Caco-2 (cell line): ENCODE measurements at regions of chr3 and their contacts with region 1.

Region 1: DNA sequence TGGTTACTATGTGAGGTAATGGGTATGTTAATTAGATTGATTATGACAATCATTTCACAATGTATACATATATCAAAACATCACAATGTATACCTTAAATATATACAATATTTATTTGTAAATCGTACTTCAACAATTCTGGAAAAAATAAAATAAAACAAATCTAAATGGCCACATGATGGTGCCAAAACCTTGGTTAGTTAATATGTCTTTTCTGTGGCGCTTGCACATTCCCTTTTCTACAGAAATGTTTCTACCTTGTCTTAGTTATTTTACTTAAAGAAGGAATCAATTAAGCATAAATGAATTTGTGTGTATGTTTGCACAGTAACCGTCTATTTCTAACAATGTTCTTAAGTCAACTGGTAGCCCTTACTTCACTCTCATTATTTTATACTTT is 53.4 kb downstream of the OXSM start:
- DNase-seq: no peak
- H3K4me3 ChIP-seq: no peak overlapping the region
- H3K4me3 Mint-ChIP-seq: no peak overlapping the region
- H3K27ac Mint-ChIP-seq: no peak overlapping the region
- H3K4me1 ChIP-seq: no peaks in the 10 kb centered on the region
- H3K4me1 Mint-ChIP-seq: no peaks in the 10 kb centered on the region
- H3K27me3 ChIP-seq: no peaks in the 10 kb centered on the region
- H3K27me3 Mint-ChIP-seq: peaks cover 2% of the 10 kb centered on the region
- CTCF ChIP-seq: no peak

Region 2: DNA sequence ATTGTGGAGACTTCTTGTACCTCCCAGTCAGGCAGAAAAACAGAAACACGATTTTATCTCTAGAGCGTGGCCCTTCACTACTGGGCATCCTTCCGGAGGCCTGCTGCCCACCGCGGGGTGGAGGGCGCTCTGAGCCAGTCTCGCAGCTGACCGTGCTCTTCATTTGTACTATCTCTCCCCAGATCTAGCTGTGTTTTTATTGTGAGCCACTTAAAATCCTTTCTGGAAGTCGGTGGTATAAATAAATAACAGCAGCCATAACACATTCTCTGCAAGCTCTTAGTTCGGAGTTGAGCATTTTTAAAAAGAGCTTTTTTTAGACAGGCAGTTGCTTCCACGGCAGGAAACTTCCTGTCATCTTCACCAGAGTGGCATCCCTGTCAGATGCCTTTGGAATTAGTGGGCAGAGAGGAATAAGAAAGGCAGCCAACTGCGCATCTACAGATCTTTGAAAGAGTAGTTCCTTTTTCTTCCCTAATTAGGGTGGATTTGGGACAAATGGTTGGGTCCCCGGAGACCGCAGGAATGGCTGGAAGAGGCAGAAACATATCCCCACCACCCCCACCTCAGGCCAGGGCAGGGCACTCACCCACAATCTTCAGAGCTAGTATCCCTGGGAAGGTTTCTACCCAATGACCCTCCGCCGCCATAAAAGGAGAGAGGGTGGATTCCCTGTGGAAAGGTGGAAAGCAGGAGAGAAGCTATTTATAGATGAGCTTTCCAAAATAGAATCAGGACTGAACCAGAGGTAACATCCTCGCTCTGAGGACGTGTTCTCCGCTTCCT is 269.8 kb before region 1 on chr3:
- CTCF ChIA-PET with region 1: no interaction called
- POLR2A ChIA-PET with region 1: no interaction called
- intact Hi-C with region 1: no loop called
- DNase-seq: no peak
- H3K4me3 ChIP-seq: no peak overlapping the region
- H3K4me3 Mint-ChIP-seq: no peak overlapping the region
- H3K27ac Mint-ChIP-seq: no peak overlapping the region
- H3K4me1 ChIP-seq: no peaks in the 10 kb centered on the region
- H3K4me1 Mint-ChIP-seq: no peaks in the 10 kb centered on the region
- H3K27me3 ChIP-seq: no peaks in the 10 kb centered on the region
- H3K27me3 Mint-ChIP-seq: no peaks in the 10 kb centered on the region
- CTCF ChIP-seq: no peak

Region 3: DNA sequence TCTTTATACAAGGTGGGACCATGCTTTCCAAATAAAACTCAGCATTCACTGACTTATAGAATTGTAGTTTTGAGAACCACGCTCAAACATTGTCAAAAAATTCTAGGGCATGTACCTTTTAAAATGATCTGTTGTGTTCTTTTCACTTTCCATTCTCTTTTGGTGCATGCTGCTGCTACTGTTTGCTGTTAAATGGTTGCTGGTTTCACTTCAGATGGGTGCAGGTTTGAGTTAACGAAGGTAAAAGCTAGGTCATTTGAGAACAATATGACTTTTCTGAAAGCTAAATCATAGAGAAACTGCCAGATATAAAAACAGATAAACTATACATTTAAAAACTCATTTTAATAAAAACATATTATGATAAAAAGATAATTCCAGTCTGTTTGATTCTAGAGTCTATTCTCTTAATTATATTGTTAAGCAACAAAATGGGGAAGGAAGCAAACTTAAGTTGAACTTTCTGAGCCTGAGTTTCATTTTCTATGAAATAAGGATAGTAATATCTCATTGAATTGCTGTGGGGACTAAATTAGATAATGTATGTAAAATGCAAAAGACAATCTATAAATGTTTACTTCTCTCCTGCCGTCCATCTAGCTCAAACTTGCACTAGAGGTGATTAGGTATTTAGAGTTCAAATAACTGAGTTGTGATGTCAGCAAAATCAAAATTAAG is 29.0 kb after region 1 on chr3:
- CTCF ChIA-PET with region 1: no interaction called
- POLR2A ChIA-PET with region 1: no interaction called
- intact Hi-C with region 1: loop called (anchors 2 kb)
- DNase-seq: no peak
- H3K4me3 ChIP-seq: no peak overlapping the region
- H3K4me3 Mint-ChIP-seq: no peak overlapping the region
- H3K27ac Mint-ChIP-seq: no peak overlapping the region
- H3K4me1 ChIP-seq: no peaks in the 10 kb centered on the region
- H3K4me1 Mint-ChIP-seq: no peaks in the 10 kb centered on the region
- H3K27me3 ChIP-seq: no peaks in the 10 kb centered on the region
- H3K27me3 Mint-ChIP-seq: peaks cover 3% of the 10 kb centered on the region
- CTCF ChIP-seq: no peak

Region 4: DNA sequence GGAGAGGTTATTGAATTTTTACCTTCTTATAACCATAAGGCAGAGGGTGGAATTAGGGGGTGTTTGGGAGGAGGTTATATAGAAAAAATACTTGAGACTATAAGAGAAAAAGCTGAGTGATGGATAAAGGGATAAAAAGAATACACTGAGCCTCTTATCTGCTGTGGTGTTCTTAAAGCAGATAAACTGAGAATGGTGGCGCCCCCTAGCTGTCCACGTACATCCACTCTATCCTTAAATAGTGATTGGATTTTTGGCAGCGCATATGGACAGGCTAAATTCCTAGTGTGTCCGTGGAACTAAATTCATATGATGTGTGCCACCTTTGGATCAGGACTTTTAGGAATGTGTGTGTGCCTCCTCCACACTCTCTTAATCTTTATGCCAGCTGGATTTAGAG is 67.7 kb after region 1 on chr3:
- CTCF ChIA-PET with region 1: no interaction called
- POLR2A ChIA-PET with region 1: no interaction called
- intact Hi-C with region 1: no loop called
- DNase-seq: peak in 1 of 2 experiments; percentile 7
- H3K4me3 ChIP-seq: no peak overlapping the region
- H3K4me3 Mint-ChIP-seq: no peak overlapping the region
- H3K27ac Mint-ChIP-seq: no peak overlapping the region
- H3K4me1 ChIP-seq: no peaks in the 10 kb centered on the region
- H3K4me1 Mint-ChIP-seq: no peaks in the 10 kb centered on the region
- H3K27me3 ChIP-seq: no peaks in the 10 kb centered on the region
- H3K27me3 Mint-ChIP-seq: peaks cover 6% of the 10 kb centered on the region
- CTCF ChIP-seq: peak in 1 of 2 experiments; percentile 35

Region 5: GRCh38 chr3:26106228-26106627 is 262.9 kb after region 1 on chr3:
- CTCF ChIA-PET with region 1: no interaction called
- POLR2A ChIA-PET with region 1: no interaction called
- intact Hi-C with region 1: no loop called
- DNase-seq: no peak
- H3K4me3 ChIP-seq: no peak overlapping the region
- H3K4me3 Mint-ChIP-seq: no peak overlapping the region
- H3K27ac Mint-ChIP-seq: no peak overlapping the region
- H3K4me1 ChIP-seq: no peaks in the 10 kb centered on the region
- H3K4me1 Mint-ChIP-seq: no peaks in the 10 kb centered on the region
- H3K27me3 ChIP-seq: no peaks in the 10 kb centered on the region
- H3K27me3 Mint-ChIP-seq: no peaks in the 10 kb centered on the region
- CTCF ChIP-seq: no peak

Region 6: GRCh38 chr3:26118165-26118564 is 274.8 kb after region 1 on chr3:
- CTCF ChIA-PET with region 1: no interaction called
- POLR2A ChIA-PET with region 1: no interaction called
- intact Hi-C with region 1: loop called (anchors 5 kb)
- DNase-seq: peak in 1 of 2 experiments; percentile 7
- H3K4me3 ChIP-seq: no peak overlapping the region
- H3K4me3 Mint-ChIP-seq: no peak overlapping the region
- H3K27ac Mint-ChIP-seq: no peak overlapping the region
- H3K4me1 ChIP-seq: no peaks in the 10 kb centered on the region
- H3K4me1 Mint-ChIP-seq: no peaks in the 10 kb centered on the region
- H3K27me3 ChIP-seq: no peaks in the 10 kb centered on the region
- H3K27me3 Mint-ChIP-seq: no peaks in the 10 kb centered on the region
- CTCF ChIP-seq: no peak